HEK293T (cell line): ENCODE measurements at regions of chr10 and their contacts with region 1.

Region 1: GRCh38 chr10:11515596-11516430 is 95.6 kb downstream of the USP6NL start:
- DNase-seq: peak; percentile 56

Region 2: GRCh38 chr10:11757821-11758463 is 242.1 kb after region 1 on chr10:
- CTCF ChIA-PET with region 1: interaction called, 17 read pairs
- POLR2A ChIA-PET with region 1: interaction called, 6 read pairs
- DNase-seq: peak; percentile 85